ENCODE measurements at regions of chr9 and their contacts with region 1.

Region 1: GRCh38 chr9:33466565-33467495 is 6.9 kb downstream of the NOL6 start:
- DNase-seq: peak; percentile 38
- H3K4me3 ChIP-seq: no peak overlapping the region
- H3K27ac ChIP-seq: no peak overlapping the region
- H3K4me1 ChIP-seq: no peaks in the 10 kb centered on the region
- H3K27me3 ChIP-seq: no peaks in the 10 kb centered on the region
- CTCF ChIP-seq: peak; percentile 93 to 98
- POLR2A ChIP-seq: no peak

Region 2: GRCh38 chr9:33272061-33272460 is 194.8 kb before region 1 on chr9:
- CTCF ChIA-PET with region 1: interaction called, 10 read pairs
- POLR2A ChIA-PET with region 1: no interaction called
- dilution Hi-C with region 1: no loop called
- intact Hi-C with region 1: no loop called
- DNase-seq: no peak
- H3K4me3 ChIP-seq: no peak overlapping the region
- H3K27ac ChIP-seq: no peak overlapping the region
- H3K4me1 ChIP-seq: no peaks in the 10 kb centered on the region
- H3K27me3 ChIP-seq: no peaks in the 10 kb centered on the region
- CTCF ChIP-seq: no peak
- POLR2A ChIP-seq: no peak

Region 3: GRCh38 chr9:33404788-33405362 is 62.0 kb before region 1 on chr9:
- CTCF ChIA-PET with region 1: interaction called, 82 read pairs
- POLR2A ChIA-PET with region 1: no interaction called
- dilution Hi-C with region 1: no loop called
- intact Hi-C with region 1: loop called (anchors 1 kb)
- DNase-seq: no peak
- H3K4me3 ChIP-seq: no peak overlapping the region
- H3K27ac ChIP-seq: no peak overlapping the region
- H3K4me1 ChIP-seq: no peaks in the 10 kb centered on the region
- H3K27me3 ChIP-seq: no peaks in the 10 kb centered on the region
- CTCF ChIP-seq: no peak
- POLR2A ChIP-seq: no peak

Region 4: GRCh38 chr9:33446946-33447798 is 19.7 kb before region 1 on chr9 and contains the start of gene AQP3:
- CTCF ChIA-PET with region 1: interaction called, 119 read pairs
- POLR2A ChIA-PET with region 1: no interaction called
- dilution Hi-C with region 1: no loop called
- intact Hi-C with region 1: no loop called
- DNase-seq: peak; percentile 51
- H3K4me3 ChIP-seq: peak within 1 kb of the TSS; percentile 19 to 36 (median 20)
- H3K27ac ChIP-seq: no peak within 1 kb of the TSS
- H3K4me1 ChIP-seq: peaks cover 3% of the 10 kb centered on the region
- H3K27me3 ChIP-seq: peaks cover 0 to 2% of the 10 kb centered on the region in 2 experiments
- CTCF ChIP-seq: peak in 1 of 2 donors; percentile 46
- POLR2A ChIP-seq: no peak
- total RNA-seq, gene AQP3: 0.39 and 0.93 TPM in 2 replicates

Region 5: GRCh38 chr9:33517373-33517772 is 50.5 kb after region 1 on chr9:
- CTCF ChIA-PET with region 1: interaction called, 20 read pairs
- POLR2A ChIA-PET with region 1: no interaction called
- dilution Hi-C with region 1: no loop called
- intact Hi-C with region 1: no loop called
- DNase-seq: peak; percentile 53
- H3K4me3 ChIP-seq: no peak overlapping the region
- H3K27ac ChIP-seq: no peak overlapping the region
- H3K4me1 ChIP-seq: peaks cover 3% of the 10 kb centered on the region
- H3K27me3 ChIP-seq: no peaks in the 10 kb centered on the region
- CTCF ChIP-seq: peak; percentile 50
- POLR2A ChIP-seq: no peak